MCF 10A (cell line): ENCODE measurements at regions of chr10 and their contacts with region 1.

Region 1: GRCh38 chr10:73743905-73744663 is at the start of gene SEC24C:
- DNase-seq: peak; percentile 97
- H3K4me3 Mint-ChIP-seq: peak within 1 kb of the TSS; percentile 98
- H3K27ac Mint-ChIP-seq: peak within 1 kb of the TSS; percentile 100
- H3K4me1 Mint-ChIP-seq: peaks cover 14% of the 10 kb centered on the region
- H3K27me3 Mint-ChIP-seq: no peaks in the 10 kb centered on the region
- CTCF ChIP-seq: no peak
- total RNA-seq, gene SEC24C: 78.0 and 97.9 TPM in 2 replicates

Region 2: GRCh38 chr10:73495884-73496674 is 248.0 kb before region 1 on chr10 and contains the start of gene PPP3CB:
- CTCF ChIA-PET with region 1: no interaction called
- POLR2A ChIA-PET with region 1: interaction called, 11 read pairs
- intact Hi-C with region 1: no loop called
- DNase-seq: peak; percentile 95
- H3K4me3 Mint-ChIP-seq: peak within 1 kb of the TSS; percentile 86
- H3K27ac Mint-ChIP-seq: peak within 1 kb of the TSS; percentile 74
- H3K4me1 Mint-ChIP-seq: peaks cover 28% of the 10 kb centered on the region
- H3K27me3 Mint-ChIP-seq: no peaks in the 10 kb centered on the region
- CTCF ChIP-seq: no peak
- total RNA-seq, gene PPP3CB: 34.8 and 37.4 TPM in 2 replicates

Region 3: DNA sequence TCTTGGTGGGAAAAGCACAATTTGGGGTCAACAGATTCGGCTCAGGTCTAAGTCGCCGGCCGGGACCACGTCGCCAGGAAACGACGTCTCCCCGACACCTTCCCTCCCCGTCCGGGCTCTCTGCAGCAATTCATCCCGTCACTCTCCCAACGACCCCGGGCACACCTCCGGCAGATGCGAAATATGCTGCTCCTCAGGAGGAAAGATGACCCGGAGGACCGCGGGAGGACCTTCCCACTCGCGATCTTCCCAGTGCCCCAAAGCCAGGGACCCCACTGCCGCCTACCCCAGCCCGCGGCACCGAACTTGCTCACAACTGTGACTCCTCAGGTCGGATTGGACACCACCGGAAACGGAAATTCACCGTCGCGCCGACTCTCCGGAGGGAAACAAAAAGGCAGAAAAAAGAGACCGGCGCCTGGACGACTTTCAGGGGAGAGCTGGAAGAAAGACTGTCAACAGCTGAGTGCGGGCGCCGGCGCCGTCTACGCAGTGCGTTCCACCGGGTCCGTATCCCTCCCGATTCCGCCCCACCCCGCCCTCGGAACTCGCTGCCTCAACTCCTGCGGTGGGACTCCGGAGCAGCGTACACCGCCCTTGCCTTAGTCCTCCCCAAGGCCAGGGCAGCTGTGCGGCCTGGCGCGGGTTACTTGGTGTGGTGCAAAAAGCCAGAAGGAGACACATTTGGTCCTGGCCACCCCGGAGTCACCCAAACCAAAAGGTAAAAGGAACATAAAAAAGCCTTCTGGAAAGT is 13.8 kb before region 1 on chr10:
- CTCF ChIA-PET with region 1: interaction called, 9 read pairs
- POLR2A ChIA-PET with region 1: interaction called, 195 read pairs
- intact Hi-C with region 1: no loop called
- DNase-seq: peak; percentile 93
- H3K4me3 Mint-ChIP-seq: peak overlapping the region; percentile 99
- H3K27ac Mint-ChIP-seq: peak overlapping the region; percentile 97
- H3K4me1 Mint-ChIP-seq: peaks cover 6% of the 10 kb centered on the region
- H3K27me3 Mint-ChIP-seq: no peaks in the 10 kb centered on the region
- CTCF ChIP-seq: no peak

Region 4: GRCh38 chr10:73759512-73760115 is 15.5 kb after region 1 on chr10:
- CTCF ChIA-PET with region 1: interaction called, 3 read pairs
- POLR2A ChIA-PET with region 1: interaction called, 23 read pairs
- intact Hi-C with region 1: no loop called
- DNase-seq: no peak
- H3K4me3 Mint-ChIP-seq: no peak overlapping the region
- H3K27ac Mint-ChIP-seq: no peak overlapping the region
- H3K4me1 Mint-ChIP-seq: peaks cover 23% of the 10 kb centered on the region
- H3K27me3 Mint-ChIP-seq: no peaks in the 10 kb centered on the region
- CTCF ChIP-seq: no peak

Region 5: DNA sequence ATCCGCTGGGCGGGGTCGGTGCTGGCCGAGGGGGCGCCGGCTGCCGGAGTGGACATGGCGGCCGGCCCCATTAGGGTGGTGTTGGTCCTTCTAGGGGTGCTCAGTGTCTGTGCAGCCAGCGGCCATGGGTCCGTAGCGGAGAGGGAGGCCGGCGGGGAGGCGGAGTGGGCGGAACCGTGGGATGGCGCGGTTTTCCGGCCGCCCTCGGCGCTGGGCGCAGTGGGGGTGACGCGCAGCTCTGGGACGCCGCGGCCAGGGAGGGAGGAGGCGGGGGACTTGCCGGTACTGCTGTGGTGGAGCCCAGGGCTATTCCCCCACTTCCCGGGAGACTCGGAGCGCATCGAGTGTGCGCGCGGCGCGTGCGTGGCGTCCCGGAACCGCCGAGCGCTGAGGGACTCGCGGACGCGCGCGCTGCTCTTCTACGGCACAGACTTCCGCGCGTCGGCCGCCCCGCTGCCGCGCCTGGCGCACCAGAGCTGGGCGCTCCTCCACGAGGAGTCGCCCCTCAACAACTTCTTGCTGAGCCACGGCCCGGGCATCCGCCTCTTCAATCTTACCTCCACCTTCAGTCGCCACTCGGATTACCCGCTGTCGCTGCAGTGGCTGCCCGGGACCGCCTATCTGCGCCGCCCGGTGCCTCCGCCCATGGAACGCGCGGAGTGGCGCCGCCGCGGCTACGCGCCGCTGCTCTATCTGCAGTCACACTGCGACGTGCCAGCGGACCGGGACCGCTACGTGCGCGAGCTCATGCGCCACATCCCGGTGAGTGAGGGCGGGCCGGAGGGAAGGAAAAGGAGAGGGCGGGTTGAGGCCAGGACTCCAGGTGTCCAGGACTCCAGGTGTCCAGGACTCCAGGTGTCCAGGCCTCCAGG is 28.4 kb after region 1 on chr10:
- CTCF ChIA-PET with region 1: interaction called, 3 read pairs
- POLR2A ChIA-PET with region 1: interaction called, 94 read pairs
- intact Hi-C with region 1: no loop called
- DNase-seq: peak; percentile 73
- H3K4me3 Mint-ChIP-seq: peak overlapping the region; percentile 92
- H3K27ac Mint-ChIP-seq: peak overlapping the region; percentile 79
- H3K4me1 Mint-ChIP-seq: peaks cover 31% of the 10 kb centered on the region
- H3K27me3 Mint-ChIP-seq: no peaks in the 10 kb centered on the region
- CTCF ChIP-seq: no peak

Region 6: GRCh38 chr10:73785221-73785720 is 41.2 kb after region 1 on chr10 and contains the start of gene ZSWIM8:
- CTCF ChIA-PET with region 1: interaction called, 4 read pairs
- POLR2A ChIA-PET with region 1: interaction called, 31 read pairs
- intact Hi-C with region 1: no loop called
- DNase-seq: peak; percentile 95
- H3K4me3 Mint-ChIP-seq: peak within 1 kb of the TSS; percentile 78
- H3K27ac Mint-ChIP-seq: peak within 1 kb of the TSS; percentile 84
- H3K4me1 Mint-ChIP-seq: peaks cover 28% of the 10 kb centered on the region
- H3K27me3 Mint-ChIP-seq: no peaks in the 10 kb centered on the region
- CTCF ChIP-seq: no peak
- total RNA-seq, gene ZSWIM8: 84.2 and 112 TPM in 2 replicates